ENCODE measurements at regions of chr2 and their contacts with region 1.

Region 1: GRCh38 chr2:231900486-231900942 is 25.7 kb downstream of the NPPC start:
- DNase-seq: peak; percentile 85 to 99
- H3K4me3 ChIP-seq: peak overlapping the region in 1 of 4 experiments; percentile 29; a peak in 1 of 8 replicates
- H3K27ac ChIP-seq: no peak overlapping the region
- H3K4me1 ChIP-seq: peaks cover 0 to 8% (median 2%) of the 10 kb centered on the region in 4 experiments; a peak in 5 of 7 replicates
- H3K27me3 ChIP-seq: no peaks in the 10 kb centered on the region
- CTCF ChIP-seq: peak; percentile 99
- EP300 ChIP-seq: no peak
- POLR2A ChIP-seq: no peak
- RAD21 ChIP-seq: peak; percentile 67 to 84

Region 2: DNA sequence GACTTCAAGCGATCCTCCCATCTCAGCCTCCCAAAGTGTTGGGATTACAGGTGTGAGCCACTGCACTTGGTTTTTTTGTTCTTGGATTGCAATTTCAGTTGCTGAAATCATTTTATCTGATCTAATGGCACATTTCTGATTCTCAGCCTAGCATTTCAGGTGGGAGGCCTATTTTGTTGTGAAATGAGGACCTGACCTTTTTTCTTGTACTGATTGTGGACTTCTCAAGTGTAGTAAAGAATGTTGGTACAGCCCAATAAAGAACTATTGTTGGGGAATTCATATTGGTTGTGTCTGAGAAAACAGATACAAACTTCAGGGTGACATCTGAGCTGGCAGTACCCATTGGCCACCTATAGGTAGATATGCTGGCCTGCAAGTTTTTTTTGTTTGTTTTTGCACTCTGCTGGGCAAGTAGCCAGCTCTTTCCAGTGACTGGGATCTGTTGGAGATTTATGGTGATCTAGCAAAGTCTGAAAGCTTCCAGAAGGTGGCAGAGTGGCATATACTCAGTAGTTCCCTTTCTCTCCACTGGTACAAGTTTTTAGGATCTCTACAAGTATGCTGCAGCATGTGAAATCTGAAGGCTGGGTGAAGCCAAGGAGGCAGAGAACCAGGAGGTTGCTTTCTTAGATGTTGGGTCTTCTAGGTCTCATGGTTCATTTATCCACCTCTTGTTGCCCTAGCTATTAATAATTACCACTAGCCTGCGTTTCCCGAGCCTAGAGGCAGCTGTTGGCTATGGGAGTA is 105.0 kb before region 1 on chr2:
- CTCF ChIA-PET with region 1: interaction called, 20 read pairs
- POLR2A ChIA-PET with region 1: no interaction called
- DNase-seq: no peak
- H3K4me3 ChIP-seq: no peak overlapping the region
- H3K27ac ChIP-seq: no peak overlapping the region
- H3K4me1 ChIP-seq: no peaks in the 10 kb centered on the region
- H3K27me3 ChIP-seq: no peaks in the 10 kb centered on the region
- CTCF ChIP-seq: peak in 1 of 3 experiments; percentile 74; a peak in 2 of 4 replicates
- EP300 ChIP-seq: no peak
- POLR2A ChIP-seq: no peak
- RAD21 ChIP-seq: no peak

Region 3: DNA sequence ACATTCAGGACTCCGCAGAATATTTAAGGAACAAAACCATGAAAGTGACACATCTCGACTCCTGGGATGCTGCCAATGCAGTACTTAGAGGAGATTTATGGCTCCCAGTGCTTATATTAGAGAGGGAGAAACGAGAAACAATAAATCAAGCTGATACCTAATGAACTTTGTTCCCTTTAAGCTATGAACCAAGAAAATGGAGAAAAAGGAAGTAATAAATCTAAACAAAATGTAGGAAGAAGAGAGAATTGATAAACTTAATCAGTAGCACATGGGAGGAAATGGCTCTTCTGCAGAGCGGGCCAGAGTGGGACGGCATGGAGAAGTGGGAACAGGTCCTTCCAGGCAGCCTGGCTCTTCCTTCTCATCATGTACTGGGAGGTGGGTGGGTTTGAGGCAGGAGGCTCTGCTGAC is 17.0 kb before region 1 on chr2:
- CTCF ChIA-PET with region 1: interaction called, 17 read pairs
- POLR2A ChIA-PET with region 1: no interaction called
- DNase-seq: no peak
- H3K4me3 ChIP-seq: no peak overlapping the region
- H3K27ac ChIP-seq: no peak overlapping the region
- H3K4me1 ChIP-seq: peaks cover 0 to 3% (median 0%) of the 10 kb centered on the region in 4 experiments; a peak in 1 of 7 replicates
- H3K27me3 ChIP-seq: no peaks in the 10 kb centered on the region
- CTCF ChIP-seq: no peak
- EP300 ChIP-seq: no peak
- POLR2A ChIP-seq: no peak
- RAD21 ChIP-seq: no peak

Region 4: GRCh38 chr2:232142049-232142448 is 241.5 kb after region 1 on chr2:
- CTCF ChIA-PET with region 1: interaction called, 16 read pairs
- POLR2A ChIA-PET with region 1: interaction called, 3 read pairs
- DNase-seq: no peak
- H3K4me3 ChIP-seq: no peak overlapping the region
- H3K27ac ChIP-seq: no peak overlapping the region
- H3K4me1 ChIP-seq: no peaks in the 10 kb centered on the region
- H3K27me3 ChIP-seq: no peaks in the 10 kb centered on the region
- CTCF ChIP-seq: peak; percentile 41 to 91 (median 82)
- EP300 ChIP-seq: no peak
- POLR2A ChIP-seq: no peak
- RAD21 ChIP-seq: peak; percentile 86 to 91

Region 5: DNA sequence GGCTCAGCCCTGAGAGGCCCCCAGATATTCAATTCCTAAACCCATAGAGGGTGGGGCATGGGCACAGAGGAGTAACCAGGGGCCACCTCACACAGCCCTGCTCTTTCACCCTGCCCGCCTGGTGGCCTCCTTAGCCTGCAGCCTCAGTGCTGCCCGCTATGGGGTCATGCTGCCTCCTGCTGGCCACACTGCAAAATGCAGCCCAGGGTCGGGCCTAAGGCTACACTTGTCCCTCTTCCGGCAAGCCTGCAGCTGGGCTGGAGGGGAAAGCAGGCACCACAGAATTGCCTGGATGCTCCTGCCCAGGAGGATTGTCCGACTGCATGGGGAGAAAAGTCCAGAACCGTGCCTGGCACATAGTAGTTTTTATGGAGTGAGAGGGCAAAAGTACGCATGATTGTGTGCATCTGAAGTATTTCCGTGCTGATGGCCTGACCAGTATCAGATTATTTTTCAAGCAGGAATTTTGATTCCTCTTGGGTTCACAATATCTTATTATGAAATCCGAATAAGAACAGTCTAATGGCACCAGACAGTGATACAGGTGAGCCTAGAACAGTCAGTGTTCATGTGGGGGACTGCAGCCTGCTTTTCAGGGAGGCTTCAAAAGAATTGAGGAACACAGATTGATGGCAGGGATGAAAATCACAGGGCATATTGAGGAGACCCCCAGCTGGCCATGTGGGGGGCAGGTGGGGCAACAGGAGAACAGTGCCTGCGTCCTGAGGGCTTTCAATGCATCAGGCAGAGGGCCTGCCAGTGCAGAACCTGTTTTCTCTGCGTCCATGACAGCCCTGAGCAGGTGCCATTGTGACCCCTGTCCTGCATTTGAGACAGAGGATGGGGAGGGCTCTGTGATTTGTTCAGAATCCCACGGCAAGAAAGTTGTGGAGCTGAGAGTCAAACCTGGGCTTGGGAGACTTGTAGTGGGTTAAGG is 426.9 kb after region 1 on chr2:
- CTCF ChIA-PET with region 1: interaction called, 42 read pairs
- POLR2A ChIA-PET with region 1: no interaction called
- DNase-seq: peak; percentile 77 to 99
- H3K4me3 ChIP-seq: no peak overlapping the region
- H3K27ac ChIP-seq: no peak overlapping the region
- H3K4me1 ChIP-seq: peaks cover 0 to 18% (median 10%) of the 10 kb centered on the region in 4 experiments; a peak in 6 of 7 replicates
- H3K27me3 ChIP-seq: no peaks in the 10 kb centered on the region
- CTCF ChIP-seq: peak in 2 of 3 experiments; percentile 88 to 90; a peak in 3 of 4 replicates
- EP300 ChIP-seq: no peak
- POLR2A ChIP-seq: no peak
- RAD21 ChIP-seq: peak; percentile 78 to 82

Region 6: DNA sequence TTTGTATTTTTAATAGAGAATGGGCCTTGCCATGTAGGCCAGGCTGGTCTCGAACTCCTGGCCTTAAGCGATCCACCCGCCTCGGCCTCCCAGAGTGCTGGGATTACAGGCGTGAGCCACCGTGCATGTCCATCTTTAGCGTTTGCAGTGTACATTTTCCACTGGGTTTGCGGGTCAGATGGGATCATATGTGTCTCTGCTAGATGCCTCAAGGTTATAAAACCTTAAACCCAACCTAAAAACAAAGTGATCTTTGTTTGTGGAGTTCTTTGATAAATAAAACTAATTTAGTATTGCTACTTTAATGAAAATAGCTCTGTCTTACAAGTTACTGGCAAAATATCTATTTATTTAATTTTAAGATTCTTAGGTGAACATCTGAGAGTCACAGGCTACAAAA is 493.0 kb after region 1 on chr2:
- CTCF ChIA-PET with region 1: no interaction called
- POLR2A ChIA-PET with region 1: no interaction called
- DNase-seq: no peak
- H3K4me3 ChIP-seq: no peak overlapping the region
- H3K27ac ChIP-seq: no peak overlapping the region
- H3K4me1 ChIP-seq: peaks cover 0 to 9% (median 3%) of the 10 kb centered on the region in 4 experiments; a peak in 4 of 7 replicates
- H3K27me3 ChIP-seq: peaks cover 0 to 19% (median 17%) of the 10 kb centered on the region in 4 experiments; a peak in 6 of 7 replicates
- CTCF ChIP-seq: no peak
- EP300 ChIP-seq: no peak
- POLR2A ChIP-seq: no peak
- RAD21 ChIP-seq: no peak

Region 7: GRCh38 chr2:232432598-232433184 is 532.2 kb after region 1 on chr2:
- CTCF ChIA-PET with region 1: interaction called, 10 read pairs
- POLR2A ChIA-PET with region 1: no interaction called
- DNase-seq: peak in 1 of 2 experiments; percentile 87
- H3K4me3 ChIP-seq: no peak overlapping the region
- H3K27ac ChIP-seq: peak overlapping the region; percentile 27; the same call in 1 of the 2 replicates
- H3K4me1 ChIP-seq: peaks cover 0 to 9% (median 7%) of the 10 kb centered on the region in 4 experiments; a peak in 6 of 7 replicates
- H3K27me3 ChIP-seq: peaks cover 0 to 2% (median 0%) of the 10 kb centered on the region in 4 experiments; a peak in 1 of 7 replicates
- CTCF ChIP-seq: peak in 2 of 3 experiments; percentile 50 to 78; a peak in 2 of 4 replicates
- EP300 ChIP-seq: no peak
- POLR2A ChIP-seq: no peak
- RAD21 ChIP-seq: peak; percentile 24 to 42; a peak in 3 of 4 replicates